AG04449 (cell line): ENCODE measurements at regions of chr12 and their contacts with region 1.

Region 1: GRCh38 chr12:116880817-116881324 is 370 bp downstream of the HRK start:
- DNase-seq: no peak
- H3K4me3 ChIP-seq: peak overlapping the region; percentile 12
- CTCF ChIP-seq: no peak

Region 2: DNA sequence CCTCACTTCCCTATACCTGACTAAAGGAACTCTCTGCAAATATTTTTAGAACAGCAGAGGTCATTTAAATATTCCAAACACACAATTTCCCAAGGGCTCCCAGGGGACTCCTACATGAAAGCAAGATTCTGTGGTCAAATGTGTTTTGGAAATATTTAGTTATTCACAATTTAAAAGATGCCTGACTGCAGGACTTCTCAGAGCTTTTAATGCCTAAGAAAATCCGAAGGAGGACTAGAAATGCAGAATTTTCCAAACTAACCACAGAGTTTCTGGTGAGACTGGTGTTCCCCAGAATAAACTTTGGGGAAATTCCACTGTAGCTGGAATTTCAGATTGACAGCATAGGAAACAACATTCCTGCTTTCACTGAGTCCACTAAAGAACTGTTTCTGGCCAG is 406.5 kb before region 1 on chr12:
- CTCF ChIA-PET with region 1: no interaction called
- POLR2A ChIA-PET with region 1: no interaction called
- DNase-seq: no peak
- H3K4me3 ChIP-seq: no peak overlapping the region
- CTCF ChIP-seq: no peak

Region 3: DNA sequence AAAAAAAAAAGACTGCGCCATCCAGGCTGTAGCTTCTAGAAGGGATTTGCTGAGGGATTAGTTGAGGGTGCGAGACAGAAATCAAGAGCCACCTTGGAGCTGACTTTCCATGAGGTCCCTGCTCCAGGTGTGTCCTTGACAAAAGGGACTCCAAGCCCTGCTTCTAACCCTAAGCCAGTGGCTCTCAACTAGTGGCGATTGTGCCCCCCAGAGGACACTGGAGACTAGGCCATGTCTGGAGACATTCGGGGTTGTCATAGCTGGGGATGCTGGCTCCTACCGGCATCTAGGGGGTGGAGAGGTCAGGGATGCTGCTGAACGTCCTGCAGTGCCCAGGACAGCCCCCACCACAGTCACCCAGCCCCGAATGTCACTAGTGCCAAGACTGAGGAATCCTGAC is 183.6 kb before region 1 on chr12:
- CTCF ChIA-PET with region 1: interaction called, 13 read pairs
- POLR2A ChIA-PET with region 1: no interaction called
- DNase-seq: no peak
- H3K4me3 ChIP-seq: no peak overlapping the region
- CTCF ChIP-seq: peak; percentile 40

Region 4: DNA sequence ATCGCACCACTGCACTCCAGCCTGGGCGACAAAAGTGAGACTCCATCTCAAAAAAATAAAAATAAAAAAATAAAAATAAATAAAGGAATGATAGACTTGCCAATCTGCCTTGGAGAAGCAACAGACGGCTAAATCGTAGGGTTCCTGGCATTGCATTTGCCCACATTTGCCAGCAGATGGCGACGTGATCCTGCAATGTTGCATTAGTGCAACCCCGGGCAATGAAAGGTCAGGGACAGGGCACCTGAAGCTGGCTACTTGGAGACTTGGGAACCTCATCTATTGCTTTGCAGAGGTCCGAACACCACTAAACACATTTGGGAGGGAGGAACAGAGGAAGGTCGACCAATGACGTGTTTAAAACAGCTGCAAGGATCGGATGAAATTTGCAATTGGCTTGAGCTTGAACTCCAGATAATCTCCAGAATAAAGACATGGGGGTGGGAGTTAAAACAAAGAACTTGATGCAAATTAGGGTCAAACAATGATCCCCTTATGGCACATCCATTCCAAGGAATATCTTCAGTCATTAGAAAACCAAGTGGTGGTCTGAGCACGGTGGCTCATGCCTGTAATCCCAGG is 177.6 kb before region 1 on chr12:
- CTCF ChIA-PET with region 1: interaction called, 48 read pairs
- POLR2A ChIA-PET with region 1: no interaction called
- DNase-seq: no peak
- H3K4me3 ChIP-seq: no peak overlapping the region
- CTCF ChIP-seq: peak; percentile 93

Region 5: DNA sequence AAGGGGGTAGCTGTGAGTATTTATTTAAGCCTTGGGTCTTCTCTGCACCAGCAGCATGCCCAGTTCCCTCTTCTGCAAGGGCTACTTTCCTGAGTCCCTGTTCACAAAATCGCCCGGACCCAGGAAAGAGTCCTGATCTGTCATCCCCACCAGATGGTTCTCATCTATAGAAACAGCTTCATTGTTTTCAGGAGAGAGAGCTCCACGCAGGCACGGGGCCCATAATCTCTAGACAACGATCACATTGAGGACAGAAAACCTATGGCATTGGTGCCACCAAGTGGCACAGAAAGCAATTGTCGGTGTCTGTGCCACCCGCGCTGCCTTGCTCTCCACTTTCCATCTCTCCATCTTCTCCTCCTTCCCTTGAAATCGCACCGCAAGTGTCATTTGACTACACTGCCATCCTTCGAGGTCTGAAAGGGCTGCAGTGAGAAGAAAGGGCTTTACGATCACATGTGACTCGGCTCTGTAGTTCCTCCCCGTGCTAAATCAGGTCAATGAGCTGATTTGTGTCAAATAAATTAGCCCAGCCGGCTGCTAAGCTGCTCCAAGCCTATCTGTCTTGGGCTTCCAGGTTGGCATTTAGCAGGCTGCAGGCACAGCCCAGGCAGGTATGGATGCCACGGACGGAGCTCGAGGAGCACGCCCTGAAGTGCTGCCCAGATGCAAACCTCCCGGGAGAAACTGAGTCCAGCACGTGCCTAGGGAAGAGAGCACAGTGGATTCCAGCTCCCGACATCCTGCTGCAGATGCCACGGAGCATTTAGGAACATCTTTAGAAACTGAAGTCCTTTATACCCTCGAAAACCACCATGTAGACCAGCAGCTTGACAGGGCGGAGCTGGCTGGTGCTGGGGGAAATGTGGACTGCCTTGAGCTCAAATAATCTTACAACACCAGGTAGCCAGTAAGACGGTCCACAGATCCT is 171.8 kb before region 1 on chr12:
- CTCF ChIA-PET with region 1: interaction called, 48 read pairs
- POLR2A ChIA-PET with region 1: no interaction called
- DNase-seq: no peak
- H3K4me3 ChIP-seq: peak overlapping the region; percentile 31
- CTCF ChIP-seq: peak; percentile 70

Region 6: GRCh38 chr12:116717466-116718437 is 163.1 kb before region 1 on chr12:
- CTCF ChIA-PET with region 1: interaction called, 10 read pairs
- POLR2A ChIA-PET with region 1: no interaction called
- DNase-seq: no peak
- H3K4me3 ChIP-seq: no peak overlapping the region
- CTCF ChIP-seq: no peak

Region 7: GRCh38 chr12:116896411-116896924 is 15.6 kb after region 1 on chr12:
- CTCF ChIA-PET with region 1: interaction called, 12 read pairs
- POLR2A ChIA-PET with region 1: no interaction called
- DNase-seq: no peak
- H3K4me3 ChIP-seq: no peak overlapping the region
- CTCF ChIP-seq: no peak

Region 8: DNA sequence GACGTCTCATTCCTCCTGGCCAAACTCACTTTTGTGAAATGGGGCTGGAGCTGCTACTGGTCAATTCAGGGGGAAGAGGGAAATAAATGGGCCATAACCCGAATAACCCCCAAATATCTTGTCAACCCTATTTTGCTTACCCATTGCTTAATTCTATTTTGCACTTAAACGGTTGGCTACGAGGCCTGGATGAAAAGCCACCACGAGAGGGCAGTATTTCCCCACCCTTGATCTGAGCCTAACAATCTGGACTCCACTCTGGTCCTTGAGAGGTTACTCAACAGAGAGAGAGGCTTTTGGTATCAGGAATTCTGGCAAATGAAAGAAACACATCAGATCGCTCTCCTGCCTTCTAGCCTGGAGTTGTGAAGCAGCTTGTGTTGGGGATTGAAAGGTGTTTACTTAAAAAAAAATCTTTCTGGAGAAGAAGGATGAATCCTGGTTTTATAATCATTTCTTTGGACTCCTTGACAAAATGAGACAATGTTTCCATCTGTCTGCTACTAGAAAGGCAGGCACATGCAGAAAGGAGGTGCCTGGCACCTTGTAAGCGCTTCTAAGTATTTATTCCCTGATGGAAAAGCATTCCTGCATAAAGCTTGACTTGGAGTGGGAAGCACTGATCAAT is 331.8 kb after region 1 on chr12:
- CTCF ChIA-PET with region 1: no interaction called
- POLR2A ChIA-PET with region 1: no interaction called
- DNase-seq: peak; percentile 36
- H3K4me3 ChIP-seq: no peak overlapping the region
- CTCF ChIP-seq: peak; percentile 79